Transverse colon (tissue), 4 donors: ENCODE measurements at regions of chr12 and their contacts with region 1.

Region 1: DNA sequence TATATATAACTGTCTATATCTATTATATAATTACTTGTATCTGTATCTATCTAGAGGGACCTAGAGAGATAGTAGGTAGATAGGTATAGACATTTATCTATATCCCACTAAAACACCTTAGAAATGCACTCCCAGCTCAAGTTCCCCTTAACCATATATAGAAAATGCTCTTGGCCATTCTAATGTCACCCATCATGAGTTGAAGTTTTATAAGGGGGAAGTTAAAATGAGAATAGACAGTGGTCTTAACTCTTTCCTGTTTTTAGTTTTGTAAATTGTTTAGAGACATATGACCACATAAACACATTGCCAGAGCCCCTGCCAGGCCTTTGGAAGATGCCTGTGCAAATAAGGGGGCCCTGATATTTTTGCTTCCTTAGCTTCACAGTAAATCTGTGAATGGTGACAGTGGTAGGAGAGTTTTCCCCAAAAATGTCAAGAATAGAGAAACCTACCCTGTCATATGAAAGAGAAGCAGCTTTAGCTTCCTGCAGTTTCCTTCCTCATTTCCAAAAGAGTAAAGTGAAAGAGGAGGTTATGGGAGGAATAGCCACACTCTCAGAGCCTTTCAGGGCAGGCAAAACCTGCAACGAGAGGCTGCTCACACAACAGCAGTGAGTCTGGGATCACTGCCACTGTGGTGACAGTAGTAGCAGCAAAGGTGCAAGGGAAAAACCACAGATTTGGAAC is 45.5 kb downstream of the MGST1 start:
- DNase-seq: no peak
- H3K4me3 ChIP-seq: no peak overlapping the region
- H3K27ac ChIP-seq: no peak overlapping the region
- H3K4me1 ChIP-seq: no peaks in the 10 kb centered on the region
- H3K27me3 ChIP-seq: no peaks in the 10 kb centered on the region
- CTCF ChIP-seq: no peak
- EP300 ChIP-seq: no peak
- POLR2A ChIP-seq: no peak

Region 2: DNA sequence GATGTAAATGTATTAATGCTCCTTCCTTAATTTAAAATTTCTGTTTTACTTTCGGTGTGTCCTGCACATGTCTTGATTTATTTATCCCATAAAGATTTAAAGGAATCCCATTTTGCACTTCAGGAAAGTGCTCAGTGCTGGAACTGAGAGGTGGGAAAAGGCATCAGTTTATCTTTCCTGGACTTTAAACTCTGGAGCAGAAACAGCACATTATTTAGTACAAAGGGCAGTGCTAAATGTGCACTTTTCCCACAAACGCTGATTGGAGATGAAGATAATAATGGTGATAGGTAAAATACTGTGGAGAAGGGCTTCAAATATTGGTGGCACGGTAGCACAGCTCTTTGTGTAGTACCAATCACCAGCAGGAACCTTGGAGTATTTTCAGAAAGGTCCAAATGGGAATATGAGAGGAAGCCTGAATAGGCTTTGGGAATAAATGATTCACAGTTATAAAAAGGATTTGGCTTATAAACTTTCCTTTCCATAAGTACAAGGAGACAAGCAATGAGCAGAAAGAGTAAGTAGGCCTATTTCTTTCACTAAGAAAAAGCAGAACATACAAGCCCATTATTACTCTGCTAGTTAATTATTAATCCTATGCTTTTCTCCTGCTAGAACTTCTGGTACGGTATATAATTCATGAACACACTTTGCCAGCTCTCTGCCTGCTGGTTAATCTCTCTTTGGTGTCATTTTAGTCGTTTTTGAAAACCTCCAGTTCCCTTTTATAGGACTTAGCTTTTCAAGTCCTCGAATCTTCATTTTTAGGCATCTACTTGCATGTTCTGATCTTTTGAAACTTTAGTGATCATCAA is 173.8 kb before region 1 on chr12:
- in situ Hi-C with region 1: no loop called
- intact Hi-C with region 1: no loop called
- DNase-seq: no peak
- H3K4me3 ChIP-seq: no peak overlapping the region
- H3K27ac ChIP-seq: no peak overlapping the region
- H3K4me1 ChIP-seq: peaks cover 0 to 9% (median 0%) of the 10 kb centered on the region in 4 donors
- H3K27me3 ChIP-seq: no peaks in the 10 kb centered on the region
- CTCF ChIP-seq: no peak
- EP300 ChIP-seq: no peak
- POLR2A ChIP-seq: no peak

Region 3: DNA sequence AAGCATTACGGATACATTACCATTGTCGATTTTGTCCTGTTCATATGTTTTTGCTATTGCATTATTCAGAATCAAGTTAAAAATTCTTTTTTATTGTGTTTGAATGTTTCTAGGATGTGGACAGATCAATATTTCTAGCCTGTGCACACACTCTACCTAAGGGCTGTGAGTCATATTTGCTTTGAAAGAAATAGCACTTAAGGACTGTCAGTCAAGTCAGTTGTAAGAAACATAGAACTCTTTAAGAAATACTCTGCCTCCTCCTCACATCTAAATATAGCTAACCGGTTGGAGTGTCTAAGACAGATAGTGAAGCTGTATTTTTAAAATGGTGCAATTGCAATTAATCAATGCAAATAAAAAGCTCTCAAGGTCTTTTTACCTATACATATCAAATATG is 63.4 kb before region 1 on chr12:
- in situ Hi-C with region 1: no loop called
- intact Hi-C with region 1: no loop called
- DNase-seq: no peak
- H3K4me3 ChIP-seq: no peak overlapping the region
- H3K27ac ChIP-seq: no peak overlapping the region
- H3K4me1 ChIP-seq: peaks cover 0 to 15% (median 11%) of the 10 kb centered on the region in 4 donors
- H3K27me3 ChIP-seq: no peaks in the 10 kb centered on the region
- CTCF ChIP-seq: no peak
- EP300 ChIP-seq: no peak
- POLR2A ChIP-seq: no peak

Region 4: DNA sequence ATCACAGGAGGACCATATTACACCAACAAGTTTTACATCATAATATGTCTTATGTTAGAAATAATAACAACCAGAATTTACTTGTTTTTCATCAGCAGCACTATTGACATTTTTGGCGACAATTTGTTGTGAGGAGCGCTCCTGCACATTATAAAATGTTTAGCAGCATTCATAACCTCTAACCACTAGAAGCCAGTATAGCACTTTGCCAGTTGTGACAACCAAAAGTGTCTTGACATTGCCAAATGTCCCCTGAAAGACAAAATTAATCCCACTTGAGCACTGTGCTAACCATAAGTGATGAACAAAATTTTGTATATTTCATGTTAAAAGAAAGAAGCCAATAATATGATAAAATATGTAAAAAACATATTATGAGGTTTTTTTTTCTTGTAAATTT is 569.9 kb after region 1 on chr12:
- in situ Hi-C with region 1: no loop called
- intact Hi-C with region 1: loop called (anchors 5 kb)
- DNase-seq: no peak
- H3K4me3 ChIP-seq: no peak overlapping the region
- H3K27ac ChIP-seq: no peak overlapping the region
- H3K4me1 ChIP-seq: no peaks in the 10 kb centered on the region
- H3K27me3 ChIP-seq: no peaks in the 10 kb centered on the region
- CTCF ChIP-seq: no peak
- EP300 ChIP-seq: no peak
- POLR2A ChIP-seq: no peak